Activated CD8-positive, alpha-beta T cell treated with anti-CD3 and anti-CD28 coated beads, Interleukin-2, amount 10 ng/mL, durations not matched to agents 7 days and 5 days (primary cell): ENCODE measurements at regions of chr2 and their contacts with region 1.

Region 1: DNA sequence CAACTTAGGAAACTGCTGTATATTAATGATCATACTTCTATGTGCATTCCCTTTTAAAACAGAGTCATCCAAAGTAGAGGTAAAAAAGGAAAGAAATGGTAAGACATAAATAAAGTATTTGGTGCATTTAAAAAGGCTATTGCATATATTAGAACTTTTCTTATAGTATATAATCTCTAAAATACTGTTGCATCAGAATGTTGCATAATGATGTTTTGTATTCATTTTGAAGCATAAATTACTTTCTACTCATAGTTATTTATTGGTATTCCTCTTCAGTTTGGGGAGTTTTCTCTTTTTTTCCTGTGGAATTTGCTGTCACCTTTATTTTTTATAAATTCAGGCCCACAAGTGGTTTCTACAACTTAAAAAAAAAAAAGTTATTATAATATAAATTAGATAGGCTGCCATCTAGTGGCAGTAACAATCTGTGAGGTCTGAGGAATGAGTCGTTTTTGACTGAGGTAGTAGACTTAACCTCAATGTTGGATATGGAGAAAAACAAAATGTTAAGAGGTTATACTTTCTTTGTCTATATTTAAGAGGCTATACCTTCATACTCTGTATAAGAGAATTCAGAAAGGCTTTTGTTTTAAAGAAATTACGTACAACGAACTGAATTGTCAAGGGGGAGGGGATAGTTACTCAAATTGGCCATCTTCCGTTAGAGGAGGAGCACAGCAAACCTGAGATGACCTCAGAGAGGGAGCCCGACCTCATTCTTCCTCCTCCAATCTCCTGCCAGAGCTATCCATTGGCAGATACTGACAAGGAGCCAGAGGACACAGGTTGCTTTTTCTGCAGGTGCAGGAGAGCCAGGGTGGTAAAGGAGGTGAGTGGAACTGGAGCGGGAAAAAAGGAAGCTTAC is 23.8 kb downstream of the ANKAR start:
- DNase-seq: peak; percentile 62
- ATAC-seq: peak; percentile 58
- H3K4me3 Mint-ChIP-seq: no peak overlapping the region
- H3K27ac Mint-ChIP-seq: no peak overlapping the region
- H3K4me1 Mint-ChIP-seq: peaks cover 4% of the 10 kb centered on the region
- H3K27me3 Mint-ChIP-seq: no peaks in the 10 kb centered on the region

Region 2: GRCh38 chr2:189674374-189675112 is 23.7 kb before region 1 on chr2 and contains the start of gene ANKAR:
- CTCF ChIA-PET with region 1: interaction called, 54 read pairs
- POLR2A ChIA-PET with region 1: no interaction called
- DNase-seq: peak; percentile 77
- ATAC-seq: peak; percentile 97
- H3K4me3 Mint-ChIP-seq: peak within 1 kb of the TSS; percentile 88
- H3K27ac Mint-ChIP-seq: peak within 1 kb of the TSS; percentile 96
- H3K4me1 Mint-ChIP-seq: peaks cover 30% of the 10 kb centered on the region
- H3K27me3 Mint-ChIP-seq: no peaks in the 10 kb centered on the region
- total RNA-seq, gene ANKAR: 4.8 to 5.2 TPM

Region 3: DNA sequence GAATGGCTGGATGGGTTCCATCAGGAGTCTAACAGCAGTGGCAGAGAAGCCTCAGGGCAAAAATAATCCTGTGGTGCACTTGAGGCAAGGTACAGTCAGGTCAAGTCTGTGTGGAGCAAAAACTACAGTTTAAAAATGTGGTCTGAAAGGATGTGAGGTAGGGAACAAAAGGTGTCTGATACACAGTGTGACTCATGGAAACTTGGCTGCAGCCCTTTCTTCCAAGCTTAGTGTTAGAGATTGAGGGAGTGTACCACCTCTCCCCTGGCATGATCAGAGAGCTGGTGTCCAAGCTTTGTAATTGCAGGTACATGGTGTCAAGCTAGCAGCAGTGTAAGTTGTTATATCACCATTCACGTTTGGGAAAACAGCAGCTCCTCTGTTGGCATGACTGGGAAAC is 14.9 kb before region 1 on chr2:
- CTCF ChIA-PET with region 1: interaction called, 15 read pairs
- POLR2A ChIA-PET with region 1: interaction called, 3 read pairs
- DNase-seq: no peak
- ATAC-seq: no peak
- H3K4me3 Mint-ChIP-seq: no peak overlapping the region
- H3K27ac Mint-ChIP-seq: no peak overlapping the region
- H3K4me1 Mint-ChIP-seq: peaks cover 25% of the 10 kb centered on the region
- H3K27me3 Mint-ChIP-seq: no peaks in the 10 kb centered on the region